ENCODE measurements at regions of chr2 and their contacts with region 1.

Region 1: DNA sequence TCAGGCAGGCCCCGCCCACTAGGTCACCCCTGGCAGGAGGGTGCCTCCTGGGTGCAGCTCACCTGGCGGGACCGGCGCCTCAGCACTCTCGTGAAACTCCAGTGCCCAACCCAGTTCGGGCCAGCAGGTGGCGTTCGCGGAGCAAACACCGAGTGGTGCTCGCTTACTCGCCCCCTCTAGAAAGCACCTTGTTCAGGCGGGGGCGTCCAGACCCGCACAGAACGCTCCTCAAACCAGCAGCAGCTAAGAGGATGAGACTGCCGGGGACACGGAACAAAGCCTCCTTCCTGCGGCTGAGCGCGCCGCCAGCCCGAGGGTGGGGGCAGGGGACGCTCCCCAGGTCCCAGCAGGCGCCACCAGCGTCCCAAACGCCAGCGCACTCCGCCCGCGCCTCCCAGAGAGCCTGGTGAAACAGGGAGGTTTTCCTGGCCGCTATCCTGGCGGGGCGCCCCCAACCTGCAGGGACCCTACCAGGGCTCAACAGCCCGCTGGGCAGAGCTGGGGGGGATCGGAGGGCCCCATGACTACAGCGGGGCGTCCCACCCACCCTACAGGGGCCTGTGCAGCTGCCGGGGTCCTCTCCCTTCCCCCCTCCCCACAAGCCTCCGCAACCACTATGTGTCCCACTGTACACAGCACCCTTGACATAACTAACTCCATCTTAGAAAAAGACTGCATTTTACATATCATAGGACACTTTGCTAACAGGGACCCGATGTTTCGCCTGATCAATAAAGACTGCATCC is 44.7 kb downstream of the MRPS5 start:
- DNase-seq: peak; percentile 74 to 79
- ATAC-seq: peak; percentile 82 to 93
- H3K4me3 ChIP-seq: peak overlapping the region; percentile 54
- H3K27ac ChIP-seq: peak overlapping the region in 1 of 2 experiments; percentile 75; a peak in 4 of 6 replicates
- H3K4me1 ChIP-seq: peaks cover 10% of the 10 kb centered on the region; the same call in 1 of the 3 replicates
- CTCF ChIP-seq: peak; percentile 91
- EP300 ChIP-seq: no peak
- POLR2A ChIP-seq: no peak
- RAD21 ChIP-seq: peak; percentile 69 to 76

Region 2: DNA sequence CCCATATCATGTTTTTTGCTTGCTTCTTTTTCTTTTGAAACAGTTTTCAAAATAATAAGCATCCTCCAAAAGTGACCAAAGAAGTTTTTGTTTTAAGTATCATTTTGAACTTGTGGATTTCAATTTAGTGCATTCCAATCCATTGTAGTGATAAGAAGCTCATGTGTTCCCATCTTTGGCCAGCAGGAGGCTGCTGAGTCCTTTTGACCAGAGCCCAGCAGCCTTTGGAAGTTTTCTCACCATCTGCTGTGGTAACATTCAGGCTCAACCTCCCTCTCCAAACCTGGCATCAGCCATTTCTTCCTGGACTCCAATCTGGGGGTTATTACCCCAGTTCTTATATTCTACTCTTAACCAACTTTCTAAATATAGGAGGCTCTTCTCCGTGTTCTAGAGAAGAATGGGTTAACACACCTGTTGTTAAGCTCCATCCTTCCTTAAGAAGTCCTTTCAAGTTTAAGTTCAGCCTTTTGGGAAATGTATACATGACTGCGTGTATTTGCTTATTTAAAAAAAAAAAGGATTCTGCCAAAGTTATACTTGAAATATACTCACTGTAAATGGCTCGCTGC is 90.5 kb before region 1 on chr2:
- CTCF ChIA-PET with region 1: interaction called, 11 read pairs
- POLR2A ChIA-PET with region 1: no interaction called
- DNase-seq: peak; percentile 61 to 71
- ATAC-seq: peak; percentile 69 to 93; a peak in 3 of 6 replicates
- H3K4me3 ChIP-seq: no peak overlapping the region
- H3K27ac ChIP-seq: no peak overlapping the region
- H3K4me1 ChIP-seq: no peaks in the 10 kb centered on the region
- CTCF ChIP-seq: peak; percentile 56
- EP300 ChIP-seq: no peak
- POLR2A ChIP-seq: no peak
- RAD21 ChIP-seq: peak; percentile 37 to 60; a peak in 4 of 5 replicates

Region 3: GRCh38 chr2:95022309-95023221 is 54.4 kb before region 1 on chr2:
- CTCF ChIA-PET with region 1: interaction called, 23 read pairs
- POLR2A ChIA-PET with region 1: no interaction called
- DNase-seq: peak; percentile 59 to 67
- ATAC-seq: peak; percentile 72 to 89
- H3K4me3 ChIP-seq: no peak overlapping the region
- H3K27ac ChIP-seq: no peak overlapping the region
- H3K4me1 ChIP-seq: 0 out of 3 replicates have a peak, but pooled peaks cover 3% of the 10 kb centered on the region
- CTCF ChIP-seq: peak; percentile 70
- EP300 ChIP-seq: no peak
- POLR2A ChIP-seq: no peak
- RAD21 ChIP-seq: peak; percentile 67 to 84; a peak in 4 of 5 replicates

Region 4: GRCh38 chr2:95053543-95053942 is 23.4 kb before region 1 on chr2:
- CTCF ChIA-PET with region 1: interaction called, 45 read pairs
- POLR2A ChIA-PET with region 1: no interaction called
- DNase-seq: peak in 1 of 2 experiments; percentile 37
- ATAC-seq: peak; percentile 40 to 62; a peak in 3 of 6 replicates
- H3K4me3 ChIP-seq: no peak overlapping the region
- H3K27ac ChIP-seq: no peak overlapping the region
- H3K4me1 ChIP-seq: no peaks in the 10 kb centered on the region
- CTCF ChIP-seq: no peak; the same call in 2 of the 3 replicates
- EP300 ChIP-seq: no peak
- POLR2A ChIP-seq: no peak
- RAD21 ChIP-seq: peak in 1 of 2 experiments; percentile 31; a peak in 2 of 5 replicates

Region 5: DNA sequence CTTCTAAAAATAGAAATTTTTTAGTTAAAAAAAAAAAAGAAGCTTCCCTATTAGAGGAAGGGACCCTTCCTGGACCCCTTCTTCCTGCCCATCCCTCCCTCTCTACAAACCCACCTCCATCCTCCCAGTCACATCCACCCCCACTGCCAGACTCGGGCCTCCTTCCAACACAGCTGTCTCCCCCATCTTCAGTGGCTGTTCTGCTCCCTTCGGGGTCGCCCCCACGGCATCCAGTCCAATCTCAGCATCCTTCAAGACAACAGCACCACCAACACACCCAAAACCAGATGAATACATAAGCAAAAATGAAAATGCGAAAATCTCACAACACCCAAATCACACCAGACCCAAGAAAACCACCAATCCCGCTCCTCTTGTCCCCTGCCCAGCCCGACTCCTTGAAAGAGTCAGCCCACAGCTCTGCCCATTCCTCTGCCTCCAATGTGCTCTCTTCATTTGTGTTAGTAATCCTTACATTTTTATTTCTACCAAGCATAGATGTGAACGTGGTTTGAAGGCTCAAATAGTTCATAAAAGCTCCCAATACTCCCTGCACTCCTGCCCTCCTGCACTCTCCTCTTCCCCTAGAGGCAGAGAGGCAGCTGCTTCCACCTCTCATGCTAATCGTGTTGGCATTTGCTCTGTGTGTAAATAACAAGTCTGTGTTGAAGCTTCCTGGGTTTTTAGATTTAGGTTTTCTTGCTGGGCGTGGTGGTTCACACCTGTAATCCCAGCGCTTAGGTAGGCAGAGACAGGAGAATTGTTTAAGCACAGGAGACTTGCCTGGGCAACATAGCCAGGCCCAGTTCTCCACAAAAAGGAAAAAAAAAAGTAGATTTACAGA is 14.5 kb before region 1 on chr2:
- CTCF ChIA-PET with region 1: interaction called, 70 read pairs
- POLR2A ChIA-PET with region 1: no interaction called
- DNase-seq: no peak
- ATAC-seq: peak; percentile 48; a peak in 2 of 6 replicates
- H3K4me3 ChIP-seq: no peak overlapping the region
- H3K27ac ChIP-seq: no peak overlapping the region
- H3K4me1 ChIP-seq: no peaks in the 10 kb centered on the region
- CTCF ChIP-seq: no peak
- EP300 ChIP-seq: no peak
- POLR2A ChIP-seq: no peak
- RAD21 ChIP-seq: no peak

Region 6: GRCh38 chr2:95091885-95092555 is 15.1 kb after region 1 on chr2:
- CTCF ChIA-PET with region 1: interaction called, 18 read pairs
- POLR2A ChIA-PET with region 1: no interaction called
- DNase-seq: no peak
- ATAC-seq: no peak
- H3K4me3 ChIP-seq: no peak overlapping the region
- H3K27ac ChIP-seq: no peak overlapping the region
- H3K4me1 ChIP-seq: no peaks in the 10 kb centered on the region
- CTCF ChIP-seq: no peak
- EP300 ChIP-seq: no peak
- POLR2A ChIP-seq: no peak; the same call in 1 of the 2 replicates
- RAD21 ChIP-seq: no peak

Region 7: DNA sequence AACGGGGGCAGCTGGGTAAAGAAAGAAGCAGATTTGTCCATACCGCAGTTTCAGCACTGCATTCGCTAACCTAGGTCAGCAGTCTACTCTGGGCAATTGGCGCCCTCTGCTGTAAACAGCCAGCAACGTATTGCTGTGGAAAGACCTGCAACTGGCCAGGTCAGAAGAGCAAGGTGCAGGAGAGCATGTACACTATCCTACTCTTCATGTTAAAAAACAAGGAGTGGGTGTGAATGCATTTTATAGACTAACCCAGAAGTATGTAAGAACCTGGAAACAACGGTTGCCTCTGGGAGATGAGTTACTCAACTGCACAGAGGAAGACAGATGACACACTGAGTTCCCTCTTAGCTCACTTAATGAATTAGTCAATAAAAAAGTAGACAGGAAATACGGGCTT is 38.5 kb after region 1 on chr2:
- CTCF ChIA-PET with region 1: interaction called, 65 read pairs
- POLR2A ChIA-PET with region 1: no interaction called
- DNase-seq: peak; percentile 68 to 83
- ATAC-seq: peak; percentile 99 to 100
- H3K4me3 ChIP-seq: no peak overlapping the region
- H3K27ac ChIP-seq: no peak overlapping the region
- H3K4me1 ChIP-seq: peaks cover 4% of the 10 kb centered on the region; the same call in 2 of the 3 replicates
- CTCF ChIP-seq: peak; percentile 80
- EP300 ChIP-seq: no peak
- POLR2A ChIP-seq: no peak
- RAD21 ChIP-seq: peak; percentile 76 to 79

Region 8: DNA sequence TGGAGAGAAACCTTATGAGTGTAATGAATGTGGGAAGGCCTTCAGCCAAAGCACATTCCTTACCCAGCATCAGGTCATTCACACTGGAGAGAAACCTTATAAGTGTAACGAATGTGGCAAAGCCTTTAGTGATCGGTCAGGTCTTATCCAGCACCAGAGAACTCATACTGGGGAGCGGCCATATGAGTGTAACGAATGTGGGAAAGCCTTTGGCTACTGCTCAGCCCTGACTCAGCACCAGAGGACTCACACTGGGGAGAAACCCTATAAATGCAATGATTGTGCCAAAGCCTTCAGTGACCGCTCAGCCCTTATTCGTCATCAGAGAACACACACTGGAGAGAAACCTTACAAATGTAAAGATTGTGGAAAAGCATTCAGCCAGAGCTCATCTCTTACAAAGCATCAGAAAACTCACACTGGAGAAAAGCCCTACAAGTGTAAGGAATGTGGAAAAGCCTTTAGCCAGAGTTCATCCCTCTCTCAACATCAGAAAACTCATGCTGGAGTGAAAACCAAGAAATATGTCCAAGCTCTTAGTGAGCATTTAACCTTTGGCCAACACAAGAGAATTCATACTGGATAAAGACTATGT is 138.2 kb after region 1 on chr2:
- CTCF ChIA-PET with region 1: no interaction called
- POLR2A ChIA-PET with region 1: no interaction called
- DNase-seq: peak in 1 of 2 experiments; percentile 13
- ATAC-seq: no peak
- H3K4me3 ChIP-seq: no peak overlapping the region
- H3K27ac ChIP-seq: no peak overlapping the region
- H3K4me1 ChIP-seq: no peaks in the 10 kb centered on the region
- CTCF ChIP-seq: no peak
- EP300 ChIP-seq: no peak
- POLR2A ChIP-seq: no peak
- RAD21 ChIP-seq: no peak

Measured in A549 (cell line).